Activated CD4-positive, alpha-beta memory T cell treated with anti-CD3 and anti-CD28 coated beads for 36 hours (primary cell): ENCODE measurements at regions of chr12 and their contacts with region 1.

Region 1: GRCh38 chr12:102484428-102484958 is 4.1 kb upstream of the IGF1 start:
- DNase-seq: peak; percentile 71
- H3K4me3 Mint-ChIP-seq: no peak overlapping the region
- H3K27ac Mint-ChIP-seq: peak overlapping the region; percentile 76
- H3K4me1 Mint-ChIP-seq: peaks cover 17% of the 10 kb centered on the region
- H3K27me3 Mint-ChIP-seq: peaks cover 3% of the 10 kb centered on the region

Region 2: DNA sequence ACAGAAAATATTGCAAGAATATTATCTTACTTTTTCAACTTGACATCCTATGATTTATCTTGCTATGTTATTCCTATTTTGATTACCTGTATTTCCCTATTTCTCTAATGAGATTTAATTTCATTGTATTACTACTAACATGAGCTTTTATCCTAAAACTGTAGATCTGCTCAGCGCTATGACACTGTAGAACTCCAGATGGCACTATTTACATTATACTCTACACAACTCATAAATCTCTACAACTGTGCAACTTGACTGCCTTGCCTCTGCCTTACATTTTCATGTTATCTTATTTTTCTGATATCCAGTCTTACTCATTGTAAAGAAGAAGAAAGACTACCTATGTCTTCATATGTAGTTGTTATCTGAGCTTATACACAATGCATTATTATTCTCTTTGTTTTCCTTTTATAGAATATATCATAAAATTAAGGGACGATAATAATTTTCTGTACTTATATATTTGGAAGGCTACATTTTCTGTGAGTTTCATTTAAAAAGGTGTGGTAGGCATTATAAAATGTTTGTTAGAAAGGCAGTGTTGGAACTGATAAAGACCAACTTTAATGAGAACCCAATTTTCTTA is 388.7 kb before region 1 on chr12:
- CTCF ChIA-PET with region 1: interaction called, 3 read pairs
- POLR2A ChIA-PET with region 1: no interaction called
- intact Hi-C with region 1: loop called (anchors 10 kb)
- DNase-seq: no peak
- H3K4me3 Mint-ChIP-seq: no peak overlapping the region
- H3K27ac Mint-ChIP-seq: no peak overlapping the region
- H3K4me1 Mint-ChIP-seq: no peaks in the 10 kb centered on the region
- H3K27me3 Mint-ChIP-seq: no peaks in the 10 kb centered on the region

Region 3: GRCh38 chr12:102119674-102120563 is 364.6 kb before region 1 on chr12 and contains the starts of genes NUP37 and PARPBP:
- CTCF ChIA-PET with region 1: no interaction called
- POLR2A ChIA-PET with region 1: no interaction called
- intact Hi-C with region 1: loop called (anchors 2 kb)
- DNase-seq: peak; percentile 95
- H3K4me3 Mint-ChIP-seq: peak within 1 kb of the TSS; percentile 87
- H3K27ac Mint-ChIP-seq: peak within 1 kb of the TSS; percentile 82
- H3K4me1 Mint-ChIP-seq: peaks cover 19% of the 10 kb centered on the region
- H3K27me3 Mint-ChIP-seq: no peaks in the 10 kb centered on the region
- total RNA-seq, gene NUP37: 86.8 to 89.5 TPM
- total RNA-seq, gene PARPBP: 24.0 to 25.9 TPM

Region 4: GRCh38 chr12:102300824-102301461 is 183.6 kb before region 1 on chr12:
- CTCF ChIA-PET with region 1: no interaction called
- POLR2A ChIA-PET with region 1: no interaction called
- intact Hi-C with region 1: loop called (anchors 1 kb)
- DNase-seq: peak; percentile 16
- H3K4me3 Mint-ChIP-seq: no peak overlapping the region
- H3K27ac Mint-ChIP-seq: no peak overlapping the region
- H3K4me1 Mint-ChIP-seq: no peaks in the 10 kb centered on the region
- H3K27me3 Mint-ChIP-seq: peaks cover 2% of the 10 kb centered on the region

Region 5: DNA sequence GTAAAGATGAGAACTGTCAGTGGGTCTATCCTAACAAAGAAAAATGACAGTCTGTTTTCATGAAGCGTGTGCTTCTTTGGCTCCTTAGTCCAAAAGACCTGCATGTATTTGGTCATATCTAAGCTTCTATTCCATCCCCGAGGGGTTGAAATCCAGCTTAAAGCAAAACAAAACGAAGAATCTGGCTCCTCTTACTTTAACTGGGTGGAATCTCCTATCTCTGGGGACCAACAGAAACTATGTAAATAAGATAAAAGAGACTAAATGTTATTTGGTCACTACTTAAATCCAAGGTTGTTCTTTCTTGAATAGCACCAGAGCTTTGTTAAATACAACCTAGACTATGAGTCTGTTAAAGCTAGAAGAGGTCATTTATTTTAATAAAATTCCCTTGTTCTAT is 13.5 kb before region 1 on chr12:
- CTCF ChIA-PET with region 1: interaction called, 10 read pairs
- POLR2A ChIA-PET with region 1: interaction called, 4 read pairs
- intact Hi-C with region 1: no loop called
- DNase-seq: no peak
- H3K4me3 Mint-ChIP-seq: no peak overlapping the region
- H3K27ac Mint-ChIP-seq: no peak overlapping the region
- H3K4me1 Mint-ChIP-seq: peaks cover 4% of the 10 kb centered on the region
- H3K27me3 Mint-ChIP-seq: peaks cover 8% of the 10 kb centered on the region